ENCODE measurements at regions of chr19 and their contacts with region 1.

Region 1: DNA sequence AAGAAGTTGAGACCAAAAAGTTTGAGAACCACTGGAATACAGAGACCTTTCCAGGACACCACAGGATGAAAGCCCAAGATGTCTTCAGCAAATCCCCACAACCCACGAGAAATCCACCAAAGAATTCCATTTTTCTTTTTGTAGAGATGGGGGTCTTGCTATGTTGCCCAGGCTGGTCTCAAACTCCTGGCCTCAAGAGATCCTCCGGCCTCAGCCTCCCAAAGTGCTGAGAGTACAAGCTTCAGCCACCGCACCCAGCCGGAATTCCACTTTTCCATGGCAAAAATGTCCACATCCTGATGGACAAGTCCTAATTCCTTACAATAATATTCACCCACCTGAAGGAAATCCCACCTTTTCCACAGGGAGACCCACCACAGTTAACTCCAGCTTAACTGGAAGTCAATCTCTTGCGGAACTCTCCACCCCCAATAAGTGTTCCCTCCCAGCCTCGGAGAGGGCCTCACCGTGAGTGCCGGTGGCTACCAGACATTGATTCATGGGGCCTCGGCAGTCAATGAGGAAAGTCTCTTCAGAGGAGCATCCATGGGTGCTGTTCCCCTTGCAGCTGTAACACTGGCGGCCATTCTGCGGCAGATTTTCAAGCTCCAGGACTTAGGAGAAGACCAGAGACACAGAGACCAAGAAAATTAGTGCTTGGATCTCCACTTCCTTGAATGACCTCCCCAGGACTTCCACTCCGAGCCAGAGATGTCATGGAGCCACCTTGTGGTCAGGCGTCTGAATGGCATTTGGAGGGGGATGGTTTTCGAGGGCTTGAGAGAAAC is 12.3 kb upstream of the CADM4 start:
- DNase-seq: peak; percentile 77
- H3K4me3 ChIP-seq: peak overlapping the region in 1 of 3 experiments; percentile 7
- H3K27ac ChIP-seq: no peak overlapping the region
- H3K4me1 ChIP-seq: no peaks in the 10 kb centered on the region
- H3K27me3 ChIP-seq: no peaks in the 10 kb centered on the region
- CTCF ChIP-seq: peak; percentile 82 to 86
- POLR2A ChIP-seq: no peak

Region 2: GRCh38 chr19:43430142-43430710 is 221.7 kb before region 1 on chr19:
- CTCF ChIA-PET with region 1: interaction called, 4 read pairs
- POLR2A ChIA-PET with region 1: no interaction called
- dilution Hi-C with region 1: no loop called
- intact Hi-C with region 1: loop called (anchors 1 kb)
- DNase-seq: no peak
- H3K4me3 ChIP-seq: no peak overlapping the region
- H3K27ac ChIP-seq: no peak overlapping the region
- H3K4me1 ChIP-seq: peaks cover 2% of the 10 kb centered on the region
- H3K27me3 ChIP-seq: no peaks in the 10 kb centered on the region
- CTCF ChIP-seq: no peak
- POLR2A ChIP-seq: no peak

Measured in endothelial cell of umbilical vein (primary cell).